Activated CD8-positive, alpha-beta T cell treated with anti-CD3 and anti-CD28 coated beads, Interleukin-2, amount 10 ng/mL, durations not matched to agents 7 days and 5 days (primary cell): ENCODE measurements at regions of chr1 and their contacts with region 1.

Region 1: DNA sequence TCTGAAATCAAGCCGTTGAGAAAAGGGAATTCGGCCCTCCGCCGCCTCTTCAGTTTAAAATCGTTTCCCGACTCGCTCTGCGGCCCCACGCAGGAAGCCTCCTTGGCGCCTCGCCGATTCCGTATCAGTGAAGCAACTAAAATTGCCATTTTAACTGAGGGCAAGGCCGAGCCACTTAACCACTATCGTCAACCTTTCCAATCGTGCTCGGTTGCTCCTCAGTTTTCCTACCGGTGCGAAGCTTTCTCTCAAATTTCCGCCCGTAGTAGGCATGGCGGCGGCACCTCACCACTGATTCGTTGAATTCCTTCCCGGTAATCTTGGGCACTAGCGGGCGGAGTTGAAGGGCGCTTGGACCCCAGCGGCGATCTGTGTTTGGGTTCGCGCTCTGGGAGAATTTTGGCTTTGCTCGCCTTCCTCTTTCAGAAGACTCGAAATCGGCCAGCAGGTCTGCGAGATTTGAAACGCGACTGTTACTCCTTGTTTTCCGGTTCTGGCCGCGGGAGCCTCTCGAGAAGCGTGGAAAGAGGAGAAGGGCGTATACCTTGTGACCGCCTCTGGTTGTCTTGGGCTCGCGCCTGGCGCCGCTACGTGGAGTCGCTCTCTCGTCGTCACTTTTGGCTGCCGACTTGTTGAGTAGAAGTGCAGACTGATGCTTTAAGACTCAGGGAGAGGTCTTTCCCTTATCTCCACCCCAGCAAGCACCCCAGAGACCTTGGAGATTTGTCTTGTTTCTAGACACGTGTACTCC is at the starts of genes CENPL and DARS2:
- DNase-seq: peak; percentile 95
- ATAC-seq: peak; percentile 89
- H3K4me3 Mint-ChIP-seq: peak within 1 kb of the TSS; percentile 86
- H3K27ac Mint-ChIP-seq: peak within 1 kb of the TSS; percentile 98
- H3K4me1 Mint-ChIP-seq: peaks cover 56% of the 10 kb centered on the region
- H3K27me3 Mint-ChIP-seq: no peaks in the 10 kb centered on the region
- total RNA-seq, gene CENPL: 35.5 to 39.2 TPM
- total RNA-seq, gene DARS2: 32.7 to 35.7 TPM

Region 2: GRCh38 chr1:173714759-173715537 is 109.6 kb before region 1 on chr1 and contains the start of gene KLHL20:
- CTCF ChIA-PET with region 1: interaction called, 6 read pairs
- POLR2A ChIA-PET with region 1: interaction called, 13 read pairs
- DNase-seq: peak; percentile 92
- ATAC-seq: peak; percentile 99
- H3K4me3 Mint-ChIP-seq: peak within 1 kb of the TSS; percentile 90
- H3K27ac Mint-ChIP-seq: peak within 1 kb of the TSS; percentile 96
- H3K4me1 Mint-ChIP-seq: peaks cover 24% of the 10 kb centered on the region
- H3K27me3 Mint-ChIP-seq: peaks cover 15% of the 10 kb centered on the region
- total RNA-seq, gene KLHL20: 18.3 to 22.3 TPM

Region 3: GRCh38 chr1:173779936-173780335 is 44.6 kb before region 1 on chr1:
- CTCF ChIA-PET with region 1: no interaction called
- POLR2A ChIA-PET with region 1: no interaction called
- DNase-seq: no peak
- ATAC-seq: no peak
- H3K4me3 Mint-ChIP-seq: no peak overlapping the region
- H3K27ac Mint-ChIP-seq: no peak overlapping the region
- H3K4me1 Mint-ChIP-seq: no peaks in the 10 kb centered on the region
- H3K27me3 Mint-ChIP-seq: no peaks in the 10 kb centered on the region